K562 (cell line): ENCODE measurements at regions of chr12 and their contacts with region 1.

Region 1: DNA sequence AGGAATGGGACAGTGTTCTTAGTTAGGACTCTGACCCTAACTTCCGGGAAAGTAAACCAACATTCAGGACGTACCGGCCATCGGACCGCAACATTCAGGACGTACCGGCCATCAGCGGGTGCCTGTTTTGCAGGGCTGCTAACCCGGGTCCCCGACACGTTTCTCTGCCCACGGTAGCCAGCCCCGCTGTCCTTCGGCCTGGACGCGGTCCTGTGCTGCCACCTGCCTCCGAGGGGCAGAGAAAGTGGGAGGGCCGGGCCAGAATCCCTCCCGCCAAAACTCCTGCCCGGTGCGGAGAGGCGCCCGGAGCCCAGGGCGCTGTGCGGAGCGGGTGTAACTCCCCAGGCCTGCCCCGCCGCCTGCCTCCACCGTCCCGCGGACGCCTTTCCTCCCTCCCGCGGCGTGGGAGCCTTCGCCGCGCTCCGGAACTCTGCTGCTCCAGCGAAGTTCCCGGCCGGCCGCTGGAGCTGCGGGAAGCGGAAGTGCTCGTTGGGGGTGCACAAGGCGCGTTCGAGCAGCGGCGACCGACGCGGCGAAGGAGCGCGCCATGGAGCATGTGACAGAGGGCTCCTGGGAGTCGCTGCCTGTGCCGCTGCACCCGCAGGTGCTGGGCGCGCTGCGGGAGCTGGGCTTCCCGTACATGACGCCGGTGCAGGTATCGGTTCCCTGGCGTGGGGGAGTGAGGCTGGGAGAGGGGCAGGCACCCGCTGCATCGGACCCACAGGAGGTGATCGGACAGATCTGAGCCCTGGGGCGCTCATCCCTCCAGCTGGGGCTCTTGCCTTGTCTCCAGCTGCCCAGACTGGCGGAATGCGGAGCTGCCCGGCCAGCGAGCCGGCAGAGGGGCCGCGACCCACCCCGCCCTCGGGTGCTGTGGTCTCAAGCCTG is at the start of gene DDX55:
- DNase-seq: peak; percentile 81 to 92 (median 84)
- ATAC-seq: peak; percentile 94
- H3K4me3 ChIP-seq: peak within 1 kb of the TSS; percentile 98
- H3K27ac ChIP-seq: peak within 1 kb of the TSS; percentile 94
- H3K4me1 ChIP-seq: peaks cover 5 to 17% of the 10 kb centered on the region in 2 experiments; a peak in 3 of 5 replicates
- H3K27me3 ChIP-seq: no peaks in the 10 kb centered on the region
- CTCF ChIP-seq: peak; percentile 34 to 58 (median 50); a peak in 5 of 6 replicates
- EP300 ChIP-seq: peak; percentile 42; the same call in 1 of the 2 replicates
- POLR2A ChIP-seq: peak; percentile 92
- RAD21 ChIP-seq: peak; percentile 69 to 71
- polyA plus RNA-seq, gene DDX55: 10.6 to 15.1 TPM

Region 2: DNA sequence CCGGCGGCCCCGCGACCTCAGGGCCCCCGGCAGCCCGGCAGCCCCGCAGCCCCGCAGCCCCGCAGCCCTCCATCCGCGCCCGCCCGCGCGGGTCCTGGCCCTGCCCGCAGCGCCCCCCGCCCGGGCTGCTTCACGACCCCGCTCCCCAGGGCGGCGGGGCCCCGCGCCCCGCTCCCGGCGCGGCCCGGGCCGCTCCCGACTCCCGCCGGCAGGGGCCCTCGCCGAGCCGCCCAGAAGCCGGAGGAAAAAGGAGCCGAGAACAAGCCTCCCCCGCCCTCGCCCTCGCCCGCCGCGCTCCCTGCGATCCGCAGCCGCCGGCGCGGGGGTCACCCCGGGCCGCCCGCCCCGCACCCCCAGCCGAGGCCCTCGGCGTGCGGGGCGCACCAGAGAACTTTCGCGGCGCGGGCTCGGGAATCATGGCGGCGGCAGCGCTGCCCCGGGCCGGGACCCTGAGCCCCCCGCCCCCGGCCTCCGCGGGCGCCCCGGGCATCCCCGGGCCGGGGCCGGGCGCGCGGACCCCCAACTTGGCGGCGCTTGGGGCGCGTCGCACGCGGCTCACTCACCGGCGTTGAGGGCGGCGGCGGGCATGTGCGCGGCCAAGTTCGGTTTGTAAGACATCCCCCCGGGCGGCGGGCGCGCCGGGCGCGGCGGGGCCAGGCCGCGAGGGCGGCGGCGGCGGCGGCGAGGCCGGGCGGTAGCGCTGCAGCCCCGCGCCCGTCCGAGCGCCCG is 330.7 kb before region 1 on chr12:
- CTCF ChIA-PET with region 1: interaction called, 7 read pairs
- POLR2A ChIA-PET with region 1: interaction called, 3 read pairs
- in situ Hi-C with region 1: no loop called
- intact Hi-C with region 1: loop called (anchors 2 kb)
- DNase-seq: peak; percentile 82 to 89 (median 88)
- ATAC-seq: peak; percentile 88
- H3K4me3 ChIP-seq: peak overlapping the region; percentile 63
- H3K27ac ChIP-seq: peak overlapping the region; percentile 67; the same call in 1 of the 3 replicates
- H3K4me1 ChIP-seq: peaks cover 6 to 41% of the 10 kb centered on the region in 2 experiments; a peak in 2 of 5 replicates
- H3K27me3 ChIP-seq: no peaks in the 10 kb centered on the region
- CTCF ChIP-seq: peak; percentile 10 to 68 (median 68); a peak in 4 of 6 replicates
- EP300 ChIP-seq: no peak
- POLR2A ChIP-seq: no peak
- RAD21 ChIP-seq: peak; percentile 46 to 73; a peak in 3 of 4 replicates

Region 3: GRCh38 chr12:123278101-123278627 is 323.7 kb before region 1 on chr12:
- CTCF ChIA-PET with region 1: no interaction called
- POLR2A ChIA-PET with region 1: interaction called, 3 read pairs
- in situ Hi-C with region 1: no loop called
- intact Hi-C with region 1: loop called (anchors 2 kb)
- DNase-seq: no peak
- ATAC-seq: peak; percentile 43; the same call in 2 of the 3 replicates
- H3K4me3 ChIP-seq: no peak overlapping the region
- H3K27ac ChIP-seq: 0 out of 3 replicates have a peak overlapping the region, but pooled peaks have one; percentile 51
- H3K4me1 ChIP-seq: no peaks in the 10 kb centered on the region; a peak in 1 of 5 replicates
- H3K27me3 ChIP-seq: no peaks in the 10 kb centered on the region
- CTCF ChIP-seq: no peak
- EP300 ChIP-seq: no peak
- POLR2A ChIP-seq: no peak
- RAD21 ChIP-seq: no peak

Region 4: DNA sequence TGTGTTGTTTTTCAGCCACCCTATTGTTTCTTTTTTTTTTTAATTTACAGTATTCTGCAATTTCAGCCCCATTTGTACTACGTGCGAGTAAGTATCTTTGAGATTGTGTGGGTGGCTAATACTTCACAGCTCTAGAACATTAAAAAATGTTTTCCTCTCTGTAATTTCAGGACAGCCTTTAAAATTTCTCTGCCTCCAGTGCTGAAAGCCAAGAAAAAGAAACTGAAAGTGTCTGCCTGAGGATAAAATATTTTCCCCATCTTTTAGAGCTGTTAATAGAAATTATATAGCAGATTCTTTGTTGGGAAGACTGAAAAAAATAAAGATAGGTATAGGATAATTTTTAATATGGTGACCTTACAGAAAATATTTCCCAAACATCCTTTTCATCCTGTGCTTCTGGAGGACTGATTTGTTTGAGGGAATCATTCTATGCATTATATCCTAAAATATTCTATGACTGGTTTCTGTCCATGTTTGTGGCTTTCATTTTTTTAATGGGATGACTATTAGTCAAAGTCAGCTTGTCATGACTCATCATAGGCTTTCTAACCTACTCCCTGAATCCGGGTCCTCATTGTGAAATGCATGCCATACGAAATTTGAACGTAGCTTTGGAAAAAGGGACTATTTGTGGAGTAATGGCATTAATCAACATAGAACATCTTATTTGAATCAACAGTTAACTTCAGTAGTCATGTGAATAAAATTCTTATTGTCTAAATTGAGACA is 58.3 kb after region 1 on chr12:
- CTCF ChIA-PET with region 1: no interaction called
- POLR2A ChIA-PET with region 1: no interaction called
- in situ Hi-C with region 1: no loop called
- intact Hi-C with region 1: no loop called
- DNase-seq: no peak
- ATAC-seq: no peak
- H3K4me3 ChIP-seq: no peak overlapping the region
- H3K27ac ChIP-seq: no peak overlapping the region
- H3K4me1 ChIP-seq: no peaks in the 10 kb centered on the region; a peak in 1 of 5 replicates
- H3K27me3 ChIP-seq: no peaks in the 10 kb centered on the region
- CTCF ChIP-seq: no peak
- EP300 ChIP-seq: no peak
- POLR2A ChIP-seq: no peak
- RAD21 ChIP-seq: no peak